ENCODE measurements at regions of chr17 and their contacts with region 1.

Region 1: GRCh38 chr17:64129764-64130558 is at the start of gene ERN1:
- DNase-seq: peak; percentile 92 to 96
- ATAC-seq: peak; percentile 96 to 99 (median 98)
- H3K4me3 ChIP-seq: peak within 1 kb of the TSS; percentile 62 to 87 (median 80)
- H3K27ac ChIP-seq: peak within 1 kb of the TSS; percentile 82 to 98 (median 96)
- H3K4me1 ChIP-seq: peaks cover 0 to 47% (median 32%) of the 10 kb centered on the region in 9 donors
- H3K27me3 ChIP-seq: no peaks in the 10 kb centered on the region
- CTCF ChIP-seq: peak in 1 of 9 donors; percentile 17
- total RNA-seq, gene ERN1: 5.0 to 16.6 (median 7.6) TPM

Region 2: GRCh38 chr17:63911657-63912426 is 218.1 kb before region 1 on chr17:
- intact Hi-C with region 1: loop called in 7 of 10 experiments (anchors 5 to 10 kb)
- DNase-seq: peak in 1 of 2 donors; percentile 45
- ATAC-seq: peak in 6 of 8 donors; percentile 47 to 72 (median 66)
- H3K4me3 ChIP-seq: no peak overlapping the region
- H3K27ac ChIP-seq: no peak overlapping the region
- H3K4me1 ChIP-seq: no peaks in the 10 kb centered on the region
- H3K27me3 ChIP-seq: peaks cover 0 to 14% (median 8%) of the 10 kb centered on the region in 7 donors
- CTCF ChIP-seq: peak; percentile 74 to 87 (median 82)

Region 3: DNA sequence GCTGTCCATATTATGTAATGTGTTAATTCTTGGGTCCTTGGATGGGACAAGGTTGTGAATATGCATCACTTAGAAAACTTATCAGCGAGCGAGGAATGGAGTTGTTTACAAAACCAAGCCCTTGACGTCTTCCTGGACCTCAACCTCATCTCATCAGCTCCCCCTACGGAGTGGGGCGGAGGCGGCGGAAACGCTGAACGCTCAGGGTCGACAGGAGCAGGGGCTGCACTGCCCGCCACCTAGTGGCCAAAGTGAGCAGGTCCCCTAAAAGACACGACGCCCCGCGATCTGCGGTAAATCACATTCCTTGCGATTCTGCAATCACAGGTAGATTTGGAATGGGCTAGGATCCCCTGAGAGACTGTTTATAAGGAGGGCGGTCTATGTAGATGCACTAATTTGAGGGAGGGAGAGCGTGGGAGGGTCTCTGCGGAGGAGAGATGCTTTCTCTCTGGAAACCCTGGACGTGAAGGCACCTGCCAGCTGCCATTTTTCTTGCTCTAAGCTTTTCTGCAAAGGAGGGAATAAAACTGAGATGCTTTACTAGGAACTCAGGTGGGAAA is 104.1 kb before region 1 on chr17:
- intact Hi-C with region 1: loop called (anchors 1 to 5 kb)
- DNase-seq: peak; percentile 80 to 81
- ATAC-seq: peak in 7 of 8 donors; percentile 69 to 85 (median 82)
- H3K4me3 ChIP-seq: peak overlapping the region in 5 of 10 donors; percentile 14 to 32 (median 26)
- H3K27ac ChIP-seq: peak overlapping the region in 7 of 10 donors; percentile 4 to 97 (median 66)
- H3K4me1 ChIP-seq: peaks cover 4 to 31% (median 20%) of the 10 kb centered on the region in 9 donors
- H3K27me3 ChIP-seq: no peaks in the 10 kb centered on the region
- CTCF ChIP-seq: peak; percentile 88 to 97 (median 95)

Region 4: GRCh38 chr17:64073771-64074703 is 55.9 kb before region 1 on chr17:
- intact Hi-C with region 1: loop called in 2 of 10 experiments (anchors 10 kb)
- DNase-seq: no peak
- ATAC-seq: peak in 1 of 8 donors; percentile 50
- H3K4me3 ChIP-seq: no peak overlapping the region
- H3K27ac ChIP-seq: peak overlapping the region in 4 of 10 donors; percentile 31 to 83 (median 36)
- H3K4me1 ChIP-seq: peaks cover 0 to 45% (median 8%) of the 10 kb centered on the region in 9 donors
- H3K27me3 ChIP-seq: no peaks in the 10 kb centered on the region
- CTCF ChIP-seq: no peak

Measured in heart right ventricle (tissue), 16 donors.